ENCODE measurements at regions of chr3 and their contacts with region 1.

Region 1: GRCh38 chr3:129052675-129053074 is 7.9 kb upstream of the GP9 start:
- DNase-seq: no peak
- H3K4me3 ChIP-seq: no peak overlapping the region
- H3K27ac ChIP-seq: no peak overlapping the region
- H3K27me3 ChIP-seq: peaks cover 17% of the 10 kb centered on the region
- CTCF ChIP-seq: no peak

Region 2: DNA sequence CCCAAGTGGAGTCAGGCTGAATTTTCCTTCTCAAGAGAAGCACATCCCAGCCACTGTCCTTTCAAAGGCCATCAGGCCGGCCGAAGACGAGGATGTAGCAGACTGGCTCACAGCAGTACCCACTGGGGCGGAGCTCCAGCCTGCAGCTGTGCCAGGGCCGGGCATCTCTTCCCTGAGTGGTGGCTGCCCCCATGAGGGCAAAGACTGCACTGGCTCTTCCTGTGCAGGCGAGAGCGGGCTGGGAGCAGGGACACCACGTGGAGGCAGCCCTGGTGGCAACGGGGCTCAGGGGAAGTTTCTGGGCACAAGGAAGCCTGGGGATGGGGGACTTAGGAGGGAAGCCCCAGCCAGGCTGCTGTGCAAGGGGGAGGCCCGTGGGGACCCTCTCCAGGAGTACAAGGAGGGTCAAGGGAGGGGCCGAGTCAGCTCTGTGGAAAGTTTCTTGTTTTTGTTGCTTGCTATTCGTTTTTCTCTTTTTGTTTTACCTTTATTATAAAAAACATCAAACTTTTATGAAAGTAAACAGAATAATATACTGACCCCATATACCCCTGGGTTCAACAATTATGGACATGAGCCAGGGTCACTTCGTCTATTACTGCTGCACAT is 468.2 kb before region 1 on chr3:
- CTCF ChIA-PET with region 1: no interaction called
- POLR2A ChIA-PET with region 1: no interaction called
- DNase-seq: peak; percentile 32
- H3K4me3 ChIP-seq: no peak overlapping the region
- H3K27ac ChIP-seq: no peak overlapping the region
- H3K27me3 ChIP-seq: peaks cover 21% of the 10 kb centered on the region
- CTCF ChIP-seq: peak; percentile 73

Region 3: DNA sequence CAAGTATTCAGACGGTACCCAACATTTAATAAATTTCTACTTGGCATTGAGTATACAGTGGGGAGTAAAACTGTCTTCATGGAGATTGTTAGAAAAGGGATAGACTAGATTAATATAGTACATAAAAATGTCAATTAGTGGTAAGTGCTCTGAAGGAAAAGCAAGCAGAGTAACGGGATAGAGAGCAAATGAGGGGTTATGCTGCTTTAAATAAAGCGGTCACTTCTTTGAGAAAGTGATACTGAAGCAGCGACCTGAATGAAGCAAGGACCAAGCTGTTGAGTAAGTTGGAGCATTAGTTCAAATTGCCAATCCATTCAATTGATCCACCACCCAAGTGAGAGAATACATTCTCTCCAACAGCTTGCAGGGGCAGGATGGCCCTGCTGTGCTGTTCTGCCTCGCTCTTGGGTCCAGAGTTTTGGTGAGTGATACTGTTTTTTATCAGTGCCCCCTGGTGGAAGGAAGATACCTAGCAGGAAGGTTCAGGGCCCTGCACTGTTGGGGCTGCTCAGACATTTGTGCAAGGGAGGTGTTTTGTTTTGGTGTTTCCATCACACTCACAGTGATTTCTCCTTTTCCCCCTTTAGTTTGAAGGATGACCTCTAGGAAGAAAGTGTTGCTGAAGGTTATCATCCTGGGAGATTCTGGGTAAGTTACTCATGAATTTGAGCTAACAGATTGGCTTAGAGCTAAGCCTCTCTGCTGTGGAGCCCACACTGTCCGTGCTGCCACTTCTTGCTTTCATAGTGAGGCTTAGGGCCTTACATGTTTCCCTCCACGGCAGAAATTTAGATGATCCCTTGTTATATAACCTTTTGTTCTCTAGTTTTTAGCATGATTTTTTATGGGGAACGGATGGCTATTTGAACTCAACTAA is 257.7 kb before region 1 on chr3:
- CTCF ChIA-PET with region 1: no interaction called
- POLR2A ChIA-PET with region 1: no interaction called
- DNase-seq: peak; percentile 16
- H3K4me3 ChIP-seq: no peak overlapping the region
- H3K27ac ChIP-seq: no peak overlapping the region
- H3K27me3 ChIP-seq: no peaks in the 10 kb centered on the region
- CTCF ChIP-seq: peak; percentile 79

Region 4: GRCh38 chr3:129016356-129016719 is 36.3 kb before region 1 on chr3:
- CTCF ChIA-PET with region 1: interaction called, 10 read pairs
- POLR2A ChIA-PET with region 1: no interaction called
- DNase-seq: no peak
- H3K4me3 ChIP-seq: no peak overlapping the region
- H3K27ac ChIP-seq: no peak overlapping the region
- H3K27me3 ChIP-seq: no peaks in the 10 kb centered on the region
- CTCF ChIP-seq: no peak

Region 5: GRCh38 chr3:129026728-129027543 is 25.7 kb before region 1 on chr3:
- CTCF ChIA-PET with region 1: interaction called, 29 read pairs
- POLR2A ChIA-PET with region 1: no interaction called
- DNase-seq: no peak
- H3K4me3 ChIP-seq: no peak overlapping the region
- H3K27ac ChIP-seq: no peak overlapping the region
- H3K27me3 ChIP-seq: peaks cover 37% of the 10 kb centered on the region
- CTCF ChIP-seq: peak; percentile 8; the same call in 1 of the 2 replicates

Region 6: GRCh38 chr3:129039271-129040038 is 13.2 kb before region 1 on chr3:
- CTCF ChIA-PET with region 1: interaction called, 23 read pairs
- POLR2A ChIA-PET with region 1: no interaction called
- DNase-seq: no peak
- H3K4me3 ChIP-seq: no peak overlapping the region
- H3K27ac ChIP-seq: no peak overlapping the region
- H3K27me3 ChIP-seq: peaks cover 54% of the 10 kb centered on the region
- CTCF ChIP-seq: no peak

Region 7: DNA sequence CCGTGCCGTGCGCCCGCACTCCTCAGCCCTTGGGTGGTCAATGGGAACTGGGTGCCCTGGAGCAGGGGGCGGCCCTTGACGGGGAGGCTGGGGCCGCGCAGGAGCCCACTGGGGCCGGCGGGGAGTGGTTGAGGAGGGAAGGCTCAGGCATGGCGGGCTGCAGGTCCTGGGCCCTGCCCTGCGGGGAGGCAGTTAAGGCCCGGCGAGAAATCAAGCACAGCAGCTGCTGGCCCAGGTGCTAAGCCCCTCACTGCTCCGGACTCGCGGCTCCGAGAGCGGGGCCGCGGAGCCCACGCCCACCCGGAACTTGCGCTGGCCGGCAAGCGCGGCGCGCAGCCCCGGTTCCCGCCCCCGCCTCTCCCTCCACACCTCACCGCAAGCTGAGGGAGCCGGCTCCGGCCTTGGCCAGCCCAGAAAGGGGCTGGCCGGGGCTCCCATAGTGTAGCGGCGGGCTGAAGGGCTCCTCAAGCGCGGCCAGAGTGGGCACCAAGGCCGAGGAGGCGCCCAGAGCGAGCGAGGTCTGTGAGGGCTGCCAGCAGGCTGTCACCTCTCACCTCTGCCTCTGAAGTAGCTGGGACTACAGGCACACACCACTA is 15.7 kb after region 1 on chr3:
- CTCF ChIA-PET with region 1: interaction called, 34 read pairs
- POLR2A ChIA-PET with region 1: no interaction called
- DNase-seq: no peak
- H3K4me3 ChIP-seq: peak overlapping the region; percentile 41; the same call in 1 of the 2 replicates
- H3K27ac ChIP-seq: no peak overlapping the region
- H3K27me3 ChIP-seq: peaks cover 4% of the 10 kb centered on the region
- CTCF ChIP-seq: no peak

Region 8: DNA sequence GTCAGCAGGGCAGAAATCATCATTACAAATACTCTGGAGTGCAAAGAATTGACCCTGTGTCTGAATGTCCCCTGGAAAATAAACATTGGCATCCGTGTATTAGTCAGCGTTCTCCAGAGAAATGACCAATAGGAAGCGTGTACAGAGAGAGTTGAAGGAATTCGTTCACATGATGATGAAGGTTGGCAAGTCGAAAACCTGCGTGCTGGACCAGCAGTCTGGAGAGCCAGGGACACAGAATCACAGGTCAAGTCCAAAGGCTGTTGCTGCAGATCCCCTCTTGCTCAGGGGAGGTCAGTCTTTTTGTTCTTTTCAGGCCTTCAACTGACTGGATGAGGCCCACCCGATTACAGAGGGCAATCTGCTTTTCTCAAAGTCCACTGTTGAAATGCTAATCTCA is 24.5 kb after region 1 on chr3:
- CTCF ChIA-PET with region 1: interaction called, 10 read pairs
- POLR2A ChIA-PET with region 1: no interaction called
- DNase-seq: peak; percentile 16
- H3K4me3 ChIP-seq: no peak overlapping the region
- H3K27ac ChIP-seq: peak overlapping the region; percentile 31
- H3K27me3 ChIP-seq: peaks cover 5% of the 10 kb centered on the region
- CTCF ChIP-seq: no peak

Region 9: DNA sequence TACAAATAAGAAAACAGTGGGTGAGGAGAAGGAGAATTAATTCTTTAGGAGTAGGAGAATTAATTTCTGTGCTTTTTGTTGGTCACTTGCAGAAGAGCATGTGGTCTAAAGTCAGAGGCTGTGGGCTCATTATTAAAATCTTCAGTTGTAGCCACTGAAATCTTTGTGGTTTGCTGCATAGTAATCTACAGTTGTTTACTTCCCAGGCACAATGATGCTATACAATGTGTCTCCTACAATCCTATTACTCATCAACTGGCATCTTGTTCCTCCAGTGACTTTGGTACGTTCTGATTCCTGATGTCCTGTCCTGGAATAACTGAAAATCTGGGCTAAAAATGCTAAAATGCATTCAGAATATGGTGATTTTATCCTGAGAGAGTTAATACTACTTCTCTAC is 408.3 kb after region 1 on chr3:
- CTCF ChIA-PET with region 1: no interaction called
- POLR2A ChIA-PET with region 1: no interaction called
- DNase-seq: peak; percentile 18
- H3K4me3 ChIP-seq: no peak overlapping the region
- H3K27ac ChIP-seq: no peak overlapping the region
- H3K27me3 ChIP-seq: no peaks in the 10 kb centered on the region
- CTCF ChIP-seq: no peak

Region 10: GRCh38 chr3:130081351-130081881 is 1028.7 kb after region 1 on chr3 and contains the start of gene ALG1L2:
- CTCF ChIA-PET with region 1: no interaction called
- POLR2A ChIA-PET with region 1: no interaction called
- DNase-seq: no peak
- H3K4me3 ChIP-seq: no peak within 1 kb of the TSS
- H3K27ac ChIP-seq: no peak within 1 kb of the TSS
- H3K27me3 ChIP-seq: no peaks in the 10 kb centered on the region
- CTCF ChIP-seq: no peak
- polyA plus RNA-seq, gene ALG1L2: 0.29 TPM in 1 of 2 replicates, not detected in the other

Measured in AG04450 (cell line).